ENCODE measurements at regions of chr20 and their contacts with region 1.

Region 1: GRCh38 chr20:36861875-36862801 is 13.8 kb upstream of the TLDC2 start:
- DNase-seq: peak; percentile 36
- ATAC-seq: no peak; the same call in 1 of the 2 replicates
- H3K4me3 Mint-ChIP-seq: peak overlapping the region; percentile 68
- H3K27ac Mint-ChIP-seq: no peak overlapping the region
- H3K4me1 Mint-ChIP-seq: peaks cover 46% of the 10 kb centered on the region
- H3K27me3 Mint-ChIP-seq: peaks cover 18% of the 10 kb centered on the region
- CTCF ChIP-seq: no peak

Region 2: DNA sequence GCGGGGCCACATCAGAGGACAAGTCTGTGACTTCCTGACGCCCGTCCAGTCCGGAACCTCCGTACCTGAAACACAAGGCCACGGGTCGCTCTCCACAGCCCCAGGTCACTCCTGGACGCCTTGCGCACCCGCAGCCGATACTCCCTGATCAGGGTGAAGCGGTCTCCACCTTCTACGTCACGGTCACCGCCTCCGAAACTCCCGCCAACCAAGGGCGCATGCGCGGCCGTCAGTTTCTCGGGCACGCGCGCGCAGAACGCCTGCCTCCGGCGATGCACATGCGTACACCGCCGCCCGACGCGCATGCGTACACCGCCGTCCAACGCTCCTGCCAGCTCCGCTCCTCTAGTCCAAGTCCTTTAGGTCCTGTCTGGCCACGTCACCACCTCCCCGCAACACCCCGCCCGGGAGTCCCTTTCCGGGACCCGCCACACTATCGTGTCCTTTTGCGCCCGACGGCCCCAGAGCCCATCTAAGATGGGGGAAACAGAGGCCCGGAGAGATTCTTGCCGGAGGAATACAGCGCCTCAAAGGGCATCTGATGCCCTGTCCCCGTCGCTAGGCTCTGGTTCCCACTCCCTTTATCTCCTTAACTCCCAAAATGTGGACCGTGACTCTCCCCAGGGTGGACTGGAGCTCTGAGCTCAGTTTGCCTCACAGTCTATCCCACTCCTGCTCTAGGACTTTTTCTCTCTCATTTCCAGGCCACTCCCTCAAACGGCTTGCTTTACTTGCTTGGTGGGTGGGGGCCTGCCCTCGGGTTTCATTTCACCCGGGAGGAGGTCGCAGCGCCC is 88.3 kb before region 1 on chr20 and contains the start of gene DSN1:
- CTCF ChIA-PET with region 1: interaction called, 16 read pairs
- POLR2A ChIA-PET with region 1: interaction called, 4 read pairs
- DNase-seq: peak; percentile 99
- ATAC-seq: peak; percentile 80
- H3K4me3 Mint-ChIP-seq: peak within 1 kb of the TSS; percentile 90
- H3K27ac Mint-ChIP-seq: peak within 1 kb of the TSS; percentile 100
- H3K4me1 Mint-ChIP-seq: peaks cover 7% of the 10 kb centered on the region
- H3K27me3 Mint-ChIP-seq: peaks cover 2% of the 10 kb centered on the region; the same call in 1 of the 2 replicates
- CTCF ChIP-seq: no peak
- total RNA-seq, gene DSN1: 26.0 to 27.0 TPM (median 26.9 TPM) in 3 replicates

Region 3: DNA sequence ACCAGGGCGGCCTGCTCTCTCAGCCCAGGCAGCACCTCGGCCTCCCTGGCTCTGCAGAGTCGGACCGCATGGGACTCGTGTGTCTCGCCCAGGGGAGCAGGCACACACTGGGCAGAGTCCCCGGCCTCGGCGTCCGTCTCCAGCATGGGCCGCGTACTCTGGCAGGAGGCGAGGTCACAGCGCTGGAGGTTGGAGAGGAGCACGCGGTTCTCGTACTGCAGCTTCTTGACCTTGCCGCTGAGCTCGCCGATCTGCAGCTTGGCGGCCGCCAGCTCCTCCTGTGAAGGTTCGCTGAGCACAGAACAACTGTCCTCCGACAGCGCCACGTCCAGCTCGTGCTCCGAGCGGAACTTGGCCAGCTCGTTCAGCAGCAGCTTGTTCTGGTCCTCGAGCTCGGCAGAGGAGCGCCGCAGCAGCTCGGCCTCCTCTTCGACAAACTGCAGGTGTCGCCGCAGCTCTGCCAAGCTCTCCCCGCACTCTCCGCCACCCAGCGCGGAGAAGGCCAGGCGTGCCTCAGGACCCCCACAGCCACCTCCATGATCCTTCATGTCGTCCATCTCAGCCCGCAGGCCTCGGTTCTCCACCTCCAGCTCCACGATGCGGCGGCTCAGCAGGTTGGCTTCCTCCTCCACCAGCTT is 46.6 kb before region 1 on chr20:
- CTCF ChIA-PET with region 1: interaction called, 12 read pairs
- POLR2A ChIA-PET with region 1: no interaction called
- DNase-seq: peak; percentile 43
- ATAC-seq: peak; percentile 57
- H3K4me3 Mint-ChIP-seq: no peak overlapping the region
- H3K27ac Mint-ChIP-seq: peak overlapping the region; percentile 11; the same call in 1 of the 2 replicates
- H3K4me1 Mint-ChIP-seq: peaks cover 22% of the 10 kb centered on the region
- H3K27me3 Mint-ChIP-seq: no peaks in the 10 kb centered on the region
- CTCF ChIP-seq: no peak

Region 4: DNA sequence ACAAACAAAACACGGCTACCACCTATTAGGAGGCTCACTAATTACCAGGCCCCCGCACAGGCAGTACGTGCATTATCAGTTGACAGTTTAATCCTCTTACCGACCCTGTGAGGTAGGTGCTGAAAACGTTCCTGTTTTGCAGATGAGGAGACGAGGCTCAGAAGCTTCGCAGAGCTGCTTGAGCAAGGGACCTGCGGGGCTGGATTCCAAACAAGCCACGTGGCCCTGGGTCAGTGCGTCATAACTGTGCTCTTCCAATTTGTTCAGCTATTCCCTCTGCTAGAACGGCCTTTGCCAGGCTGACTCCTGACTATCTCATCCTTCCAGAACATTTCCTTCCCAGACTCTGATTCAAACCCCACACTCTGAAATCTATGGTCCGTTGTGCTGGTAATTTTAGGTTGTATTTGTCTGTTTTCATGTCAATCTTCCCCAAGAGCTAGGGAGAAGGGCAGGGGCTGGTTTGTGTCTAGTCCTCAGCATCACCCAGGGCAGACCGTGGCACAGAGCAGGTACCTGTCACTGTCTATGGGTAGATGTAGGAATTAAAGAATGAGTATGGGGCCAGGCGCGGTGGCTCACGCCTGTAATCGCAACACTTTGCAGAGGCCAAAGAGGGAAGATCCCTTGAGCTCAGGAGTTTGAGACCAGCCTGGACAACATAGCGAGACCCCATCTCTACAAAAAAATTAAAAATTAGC is 15.0 kb before region 1 on chr20:
- CTCF ChIA-PET with region 1: interaction called, 11 read pairs
- POLR2A ChIA-PET with region 1: interaction called, 4 read pairs
- DNase-seq: no peak
- ATAC-seq: no peak
- H3K4me3 Mint-ChIP-seq: no peak overlapping the region
- H3K27ac Mint-ChIP-seq: peak overlapping the region; percentile 24; the same call in 1 of the 2 replicates
- H3K4me1 Mint-ChIP-seq: peaks cover 15% of the 10 kb centered on the region
- H3K27me3 Mint-ChIP-seq: no peaks in the 10 kb centered on the region
- CTCF ChIP-seq: no peak

Region 5: DNA sequence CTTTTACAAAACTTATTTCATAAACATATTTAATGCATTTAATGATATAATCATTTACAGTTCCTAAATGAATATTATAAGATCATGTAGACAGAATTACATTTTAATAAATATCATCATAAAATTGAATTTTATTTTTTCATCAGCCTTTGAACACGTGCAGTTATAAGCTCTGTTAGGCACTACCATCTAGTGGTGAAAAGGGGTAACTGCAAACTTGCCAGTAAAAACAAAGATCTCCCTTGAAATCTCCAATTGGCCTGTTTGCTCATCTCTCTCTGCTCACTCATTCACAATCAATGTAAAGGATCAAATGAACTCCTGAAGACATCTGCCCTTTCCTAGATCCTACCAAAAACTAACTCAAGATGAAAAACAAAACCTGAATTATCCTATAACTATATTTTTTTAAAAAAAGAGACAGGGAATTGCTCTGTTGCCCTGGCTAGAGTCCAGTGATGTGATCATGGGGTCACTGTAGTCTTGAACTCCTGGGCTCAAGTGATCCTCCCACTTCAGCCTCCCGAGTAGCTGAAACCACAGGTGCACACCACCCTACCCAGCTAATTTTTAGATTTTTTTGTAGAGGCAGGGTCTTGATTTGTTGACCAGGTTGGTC is 57.7 kb after region 1 on chr20:
- CTCF ChIA-PET with region 1: interaction called, 15 read pairs
- POLR2A ChIA-PET with region 1: no interaction called
- DNase-seq: no peak
- ATAC-seq: peak; percentile 43
- H3K4me3 Mint-ChIP-seq: no peak overlapping the region
- H3K27ac Mint-ChIP-seq: peak overlapping the region; percentile 86; the same call in 1 of the 2 replicates
- H3K4me1 Mint-ChIP-seq: peaks cover 11% of the 10 kb centered on the region
- H3K27me3 Mint-ChIP-seq: no peaks in the 10 kb centered on the region
- CTCF ChIP-seq: peak; percentile 86

Region 6: GRCh38 chr20:37081717-37082289 is 219.7 kb after region 1 on chr20:
- CTCF ChIA-PET with region 1: no interaction called
- POLR2A ChIA-PET with region 1: no interaction called
- DNase-seq: no peak
- ATAC-seq: peak; percentile 47
- H3K4me3 Mint-ChIP-seq: no peak overlapping the region
- H3K27ac Mint-ChIP-seq: peak overlapping the region; percentile 25; the same call in 1 of the 2 replicates
- H3K4me1 Mint-ChIP-seq: no peaks in the 10 kb centered on the region
- H3K27me3 Mint-ChIP-seq: no peaks in the 10 kb centered on the region
- CTCF ChIP-seq: no peak

Measured in WTC11 (cell line).